ENCODE measurements at regions of chr2 and their contacts with region 1.

Region 1: DNA sequence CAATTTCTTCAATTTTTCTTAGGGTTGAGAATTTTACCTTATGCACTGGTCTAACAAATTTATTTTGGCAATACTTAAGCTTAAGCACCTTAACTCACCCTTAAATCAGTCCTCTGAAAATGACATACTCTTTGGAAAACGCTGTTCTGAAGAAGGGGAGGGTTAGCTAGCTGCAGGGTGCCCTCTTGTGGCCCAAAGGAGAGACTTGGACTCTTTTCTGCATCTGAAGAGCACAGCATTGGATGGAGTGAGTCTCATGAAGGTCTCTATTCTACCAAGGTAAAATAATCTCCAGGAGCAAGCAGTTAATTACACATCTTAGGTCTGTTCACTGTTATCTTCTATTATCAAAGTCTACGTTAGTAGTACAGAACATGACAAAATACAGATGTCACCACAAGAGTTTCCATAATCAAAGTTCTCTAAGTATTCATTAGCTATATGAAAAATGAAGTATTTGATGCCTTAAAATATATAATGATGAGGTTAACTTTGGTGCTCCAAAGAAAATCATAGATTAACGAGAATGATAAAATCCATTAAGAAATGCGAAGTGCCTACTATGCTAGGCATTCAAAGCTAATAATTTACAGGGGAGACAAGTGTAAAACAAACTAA is 24.4 kb downstream of the PUM2 start:
- DNase-seq: peak; percentile 34 to 55 (median 41)
- H3K4me3 ChIP-seq: no peak overlapping the region
- H3K4me3 Mint-ChIP-seq: peak overlapping the region in 2 of 8 donors; percentile 31 to 51
- H3K27ac ChIP-seq: no peak overlapping the region
- H3K27ac Mint-ChIP-seq: peak overlapping the region; percentile 45 to 75 (median 52)
- H3K4me1 ChIP-seq: peaks cover 52% of the 10 kb centered on the region
- H3K4me1 Mint-ChIP-seq: peaks cover 42 to 76% (median 65%) of the 10 kb centered on the region in 4 donors
- H3K27me3 ChIP-seq: no peaks in the 10 kb centered on the region
- H3K27me3 Mint-ChIP-seq: no peaks in the 10 kb centered on the region

Region 2: GRCh38 chr2:20190876-20191713 is 135.2 kb before region 1 on chr2:
- CTCF ChIA-PET with region 1: no interaction called
- POLR2A ChIA-PET with region 1: no interaction called
- intact Hi-C with region 1: no loop called
- DNase-seq: no peak
- H3K4me3 ChIP-seq: no peak overlapping the region
- H3K4me3 Mint-ChIP-seq: no peak overlapping the region
- H3K27ac ChIP-seq: no peak overlapping the region
- H3K27ac Mint-ChIP-seq: no peak overlapping the region
- H3K4me1 ChIP-seq: no peaks in the 10 kb centered on the region
- H3K4me1 Mint-ChIP-seq: no peaks in the 10 kb centered on the region
- H3K27me3 ChIP-seq: no peaks in the 10 kb centered on the region
- H3K27me3 Mint-ChIP-seq: no peaks in the 10 kb centered on the region

Region 3: DNA sequence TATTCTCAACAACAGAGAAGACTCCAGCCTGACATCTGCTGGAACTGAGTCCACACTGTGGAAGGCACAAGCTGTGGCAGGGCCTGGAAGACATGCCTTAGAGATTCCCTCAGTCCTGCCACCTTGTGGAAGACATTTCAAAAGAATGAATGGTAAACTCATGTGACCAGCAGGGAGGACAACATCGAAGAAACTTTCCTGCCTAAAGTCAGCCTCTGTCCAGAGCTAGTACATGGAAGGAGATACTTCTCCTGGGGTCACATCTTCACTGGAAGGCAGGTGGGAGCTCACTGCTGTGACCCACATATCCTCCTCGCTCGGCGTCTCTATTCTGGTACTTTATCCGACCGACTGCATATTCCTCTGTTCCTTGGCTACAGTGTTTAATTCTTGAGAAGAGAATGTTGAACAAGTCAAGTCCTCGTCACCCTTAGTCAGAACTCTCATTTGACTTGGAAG is 35.1 kb before region 1 on chr2:
- CTCF ChIA-PET with region 1: interaction called, 12 read pairs
- POLR2A ChIA-PET with region 1: no interaction called
- intact Hi-C with region 1: no loop called
- DNase-seq: peak in 3 of 5 donors; percentile 2 to 17 (median 9)
- H3K4me3 ChIP-seq: no peak overlapping the region
- H3K4me3 Mint-ChIP-seq: no peak overlapping the region
- H3K27ac ChIP-seq: no peak overlapping the region
- H3K27ac Mint-ChIP-seq: peak overlapping the region in 2 of 7 donors; percentile 56 to 63
- H3K4me1 ChIP-seq: no peaks in the 10 kb centered on the region
- H3K4me1 Mint-ChIP-seq: peaks cover 5 to 11% (median 9%) of the 10 kb centered on the region in 4 donors
- H3K27me3 ChIP-seq: no peaks in the 10 kb centered on the region
- H3K27me3 Mint-ChIP-seq: no peaks in the 10 kb centered on the region

Region 4: DNA sequence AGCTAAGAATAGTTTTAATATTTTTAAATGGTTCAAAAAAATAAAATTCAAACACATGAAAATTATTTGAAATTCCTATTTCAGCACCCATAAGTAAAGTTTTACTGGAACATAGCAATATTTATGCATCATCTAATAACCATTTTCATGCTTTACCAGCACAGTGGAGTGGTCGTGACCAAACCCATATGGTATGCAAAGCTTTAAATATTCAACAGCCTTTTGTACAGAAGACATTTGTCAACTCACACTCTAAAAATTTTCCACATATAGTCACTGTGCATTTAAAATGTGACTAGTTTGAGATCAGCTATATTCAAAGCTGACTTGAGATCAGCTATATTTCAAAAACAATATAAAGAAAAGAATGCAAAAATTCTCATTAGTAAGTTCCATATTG is 21.9 kb before region 1 on chr2:
- CTCF ChIA-PET with region 1: interaction called, 17 read pairs
- POLR2A ChIA-PET with region 1: no interaction called
- intact Hi-C with region 1: no loop called
- DNase-seq: no peak
- H3K4me3 ChIP-seq: no peak overlapping the region
- H3K4me3 Mint-ChIP-seq: no peak overlapping the region
- H3K27ac ChIP-seq: no peak overlapping the region
- H3K27ac Mint-ChIP-seq: no peak overlapping the region
- H3K4me1 ChIP-seq: no peaks in the 10 kb centered on the region
- H3K4me1 Mint-ChIP-seq: peaks cover 9 to 19% (median 14%) of the 10 kb centered on the region in 4 donors
- H3K27me3 ChIP-seq: no peaks in the 10 kb centered on the region
- H3K27me3 Mint-ChIP-seq: no peaks in the 10 kb centered on the region

Region 5: DNA sequence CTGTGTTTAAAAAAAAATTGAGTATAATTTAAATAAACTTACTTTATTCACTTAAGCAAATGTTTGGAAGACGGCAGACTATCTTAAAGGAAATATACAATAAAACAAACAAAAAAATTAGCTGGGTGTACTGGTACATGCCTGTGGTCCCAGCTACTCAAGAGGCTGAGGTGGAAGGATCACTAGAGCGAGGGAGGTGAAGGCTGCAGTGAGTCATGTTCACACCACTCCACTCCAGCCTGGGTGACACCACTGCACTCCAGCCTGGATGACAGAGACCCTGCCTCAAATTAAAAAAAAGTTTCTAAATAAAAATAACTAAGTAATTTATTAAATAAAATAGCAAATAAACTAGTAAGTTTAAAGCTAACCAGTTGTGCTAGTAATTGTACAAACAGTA is 16.9 kb after region 1 on chr2:
- CTCF ChIA-PET with region 1: interaction called, 31 read pairs
- POLR2A ChIA-PET with region 1: interaction called, 14 read pairs
- intact Hi-C with region 1: no loop called
- DNase-seq: no peak
- H3K4me3 ChIP-seq: no peak overlapping the region
- H3K4me3 Mint-ChIP-seq: peak overlapping the region in 2 of 8 donors; percentile 47 to 86
- H3K27ac ChIP-seq: no peak overlapping the region
- H3K27ac Mint-ChIP-seq: peak overlapping the region in 2 of 7 donors; percentile 18 to 29
- H3K4me1 ChIP-seq: peaks cover 88% of the 10 kb centered on the region
- H3K4me1 Mint-ChIP-seq: peaks cover 57 to 94% (median 74%) of the 10 kb centered on the region in 4 donors
- H3K27me3 ChIP-seq: no peaks in the 10 kb centered on the region
- H3K27me3 Mint-ChIP-seq: no peaks in the 10 kb centered on the region